ENCODE measurements at regions of chr1 and their contacts with region 1.

Region 1: DNA sequence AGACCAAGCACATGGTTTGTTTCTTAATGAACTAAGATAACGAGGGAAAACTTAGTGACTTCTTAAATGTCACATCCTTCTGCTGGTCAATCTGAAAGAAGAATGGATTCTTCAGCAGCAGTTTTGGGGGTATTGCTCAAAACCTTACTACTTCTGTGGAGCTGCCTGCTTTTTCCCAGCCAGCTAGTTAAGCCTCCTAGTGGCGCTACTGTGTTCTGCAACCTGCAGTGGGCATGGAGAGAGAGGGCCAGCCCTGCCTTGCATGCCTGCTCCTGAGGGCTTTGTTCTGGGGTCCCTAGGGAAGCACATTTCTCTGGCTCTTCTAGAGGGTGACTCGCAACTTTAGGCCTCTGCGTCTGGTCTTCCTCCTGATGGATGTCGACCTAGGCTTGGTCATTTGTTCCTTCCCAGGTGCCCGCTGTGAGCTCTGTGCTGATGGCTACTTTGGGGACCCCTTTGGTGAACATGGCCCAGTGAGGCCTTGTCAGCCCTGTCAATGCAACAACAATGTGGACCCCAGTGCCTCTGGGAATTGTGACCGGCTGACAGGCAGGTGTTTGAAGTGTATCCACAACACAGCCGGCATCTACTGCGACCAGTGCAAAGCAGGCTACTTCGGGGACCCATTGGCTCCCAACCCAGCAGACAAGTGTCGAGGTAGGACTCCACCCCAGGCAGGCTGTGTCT is 42.0 kb downstream of the LAMC2 start:
- DNase-seq: no peak

Region 2: DNA sequence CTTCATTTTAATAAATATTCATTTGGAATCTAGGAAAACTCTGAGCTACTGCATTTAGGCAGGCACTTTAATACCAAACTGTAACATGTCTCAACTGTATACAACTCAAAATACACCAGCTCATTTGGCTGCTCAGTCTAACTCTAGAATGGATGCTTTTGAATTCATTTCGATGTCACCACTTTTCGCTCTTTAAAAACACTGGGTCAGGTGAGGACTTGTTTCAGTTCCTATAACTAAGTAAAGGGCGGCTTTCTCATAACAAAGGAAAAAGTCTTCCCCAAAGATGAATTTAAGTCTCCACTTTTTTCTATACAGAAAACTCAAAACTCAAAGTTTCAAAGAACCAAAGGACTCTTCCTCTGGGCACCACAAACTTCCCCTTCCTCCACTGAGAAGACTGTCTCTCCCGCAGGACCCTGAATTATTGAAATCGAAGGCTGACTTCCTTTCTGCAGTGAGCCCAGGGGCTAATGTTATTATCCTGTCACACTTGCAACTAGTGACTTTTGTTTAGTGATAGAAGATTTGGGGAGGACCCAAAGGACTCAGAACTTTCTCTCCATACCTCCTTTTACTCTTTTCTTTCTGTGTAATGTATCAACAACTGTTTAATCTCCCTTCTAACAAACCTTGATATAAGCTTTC is 398.7 kb before region 1 on chr1:
- intact Hi-C with region 1: no loop called
- DNase-seq: no peak

Region 3: GRCh38 chr1:183048087-183049085 is 179.7 kb before region 1 on chr1:
- intact Hi-C with region 1: no loop called
- DNase-seq: no peak

Region 4: DNA sequence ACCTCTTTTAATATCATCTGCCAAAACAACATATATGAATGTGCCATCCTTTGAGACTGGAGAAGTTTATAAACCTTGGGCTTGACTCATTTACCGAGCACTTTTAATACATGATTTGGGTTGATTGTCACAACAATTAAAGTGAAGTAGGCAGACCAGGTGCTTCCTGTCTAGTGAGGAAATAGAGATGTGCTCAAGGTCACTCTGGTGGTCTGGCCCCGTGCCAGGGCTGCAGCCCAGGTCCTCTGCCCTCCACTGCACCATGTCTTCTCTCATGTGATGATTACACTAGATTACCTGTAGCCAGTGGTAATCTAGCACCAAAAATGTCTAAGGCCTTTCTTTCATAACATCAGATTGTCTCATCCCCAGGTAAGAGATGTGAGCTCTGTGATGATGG is 103.8 kb before region 1 on chr1:
- intact Hi-C with region 1: no loop called
- DNase-seq: no peak

Region 5: DNA sequence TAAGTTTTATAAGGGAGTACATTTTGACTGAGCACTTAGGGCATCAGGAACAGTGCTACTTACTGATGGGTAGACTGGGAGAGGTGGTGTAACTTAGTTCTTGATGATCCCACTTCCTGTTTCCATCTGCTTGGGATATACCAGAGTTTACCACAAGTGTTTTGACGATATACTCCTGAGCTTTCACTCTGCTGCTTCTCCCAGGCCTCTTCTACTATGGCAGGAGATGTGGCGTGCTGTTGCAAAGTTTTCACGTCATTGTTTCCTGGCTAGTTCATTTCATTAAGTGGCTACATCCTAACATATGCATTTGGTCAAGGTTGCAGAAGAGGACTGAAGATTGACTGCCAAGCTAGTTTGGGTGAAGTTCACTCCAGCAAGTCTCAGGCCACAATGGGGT is 83.4 kb before region 1 on chr1:
- intact Hi-C with region 1: loop called (anchors 5 kb)
- DNase-seq: no peak

Measured in cardiac septum (tissue), 1 donor.